BJ (cell line): ENCODE measurements at regions of chr17 and their contacts with region 1.

Region 1: GRCh38 chr17:7351665-7352501 is at the start of gene KCTD11:
- DNase-seq: peak; percentile 63
- H3K4me3 ChIP-seq: peak within 1 kb of the TSS; percentile 71
- H3K27me3 ChIP-seq: no peaks in the 10 kb centered on the region
- CTCF ChIP-seq: no peak; the same call in 1 of the 2 replicates
- polyA plus RNA-seq, gene KCTD11: 16.2 and 19.8 TPM in 2 replicates

Region 2: DNA sequence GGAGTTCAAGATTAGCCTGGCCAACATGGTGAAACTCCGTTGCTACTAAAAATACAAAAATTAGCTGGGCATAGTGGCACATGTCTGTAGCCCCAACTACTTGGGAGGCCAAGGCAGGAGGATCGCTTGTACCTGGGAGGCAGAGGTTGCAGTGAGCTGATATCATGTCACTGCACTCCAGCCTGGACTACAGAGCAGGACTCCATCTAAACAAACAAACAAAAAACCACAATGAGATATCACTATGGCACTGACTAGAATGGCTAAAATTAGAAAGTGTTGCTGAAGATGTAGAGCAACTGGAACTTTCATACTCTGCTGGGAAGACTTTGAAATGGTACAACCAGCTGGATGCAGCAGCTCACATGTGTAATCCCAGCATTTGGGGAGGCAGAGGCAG is 22.5 kb after region 1 on chr17:
- CTCF ChIA-PET with region 1: interaction called, 24 read pairs
- POLR2A ChIA-PET with region 1: no interaction called
- DNase-seq: no peak
- H3K4me3 ChIP-seq: no peak overlapping the region
- H3K27me3 ChIP-seq: peaks cover 4% of the 10 kb centered on the region
- CTCF ChIP-seq: no peak

Region 3: GRCh38 chr17:7403977-7404736 is 52.3 kb after region 1 on chr17 and contains the start of gene TMEM256:
- CTCF ChIA-PET with region 1: interaction called, 22 read pairs
- POLR2A ChIA-PET with region 1: interaction called, 3 read pairs
- DNase-seq: peak; percentile 98
- H3K4me3 ChIP-seq: peak within 1 kb of the TSS; percentile 59
- H3K27me3 ChIP-seq: no peaks in the 10 kb centered on the region
- CTCF ChIP-seq: no peak
- polyA plus RNA-seq, gene TMEM256: 65.4 and 101 TPM in 2 replicates

Region 4: GRCh38 chr17:7440113-7440833 is 88.4 kb after region 1 on chr17:
- CTCF ChIA-PET with region 1: interaction called, 45 read pairs
- POLR2A ChIA-PET with region 1: no interaction called
- DNase-seq: no peak
- H3K4me3 ChIP-seq: peak overlapping the region; percentile 38
- H3K27me3 ChIP-seq: peaks cover 23% of the 10 kb centered on the region
- CTCF ChIP-seq: no peak